ENCODE measurements at regions of chr1 and their contacts with region 1.

Region 1: DNA sequence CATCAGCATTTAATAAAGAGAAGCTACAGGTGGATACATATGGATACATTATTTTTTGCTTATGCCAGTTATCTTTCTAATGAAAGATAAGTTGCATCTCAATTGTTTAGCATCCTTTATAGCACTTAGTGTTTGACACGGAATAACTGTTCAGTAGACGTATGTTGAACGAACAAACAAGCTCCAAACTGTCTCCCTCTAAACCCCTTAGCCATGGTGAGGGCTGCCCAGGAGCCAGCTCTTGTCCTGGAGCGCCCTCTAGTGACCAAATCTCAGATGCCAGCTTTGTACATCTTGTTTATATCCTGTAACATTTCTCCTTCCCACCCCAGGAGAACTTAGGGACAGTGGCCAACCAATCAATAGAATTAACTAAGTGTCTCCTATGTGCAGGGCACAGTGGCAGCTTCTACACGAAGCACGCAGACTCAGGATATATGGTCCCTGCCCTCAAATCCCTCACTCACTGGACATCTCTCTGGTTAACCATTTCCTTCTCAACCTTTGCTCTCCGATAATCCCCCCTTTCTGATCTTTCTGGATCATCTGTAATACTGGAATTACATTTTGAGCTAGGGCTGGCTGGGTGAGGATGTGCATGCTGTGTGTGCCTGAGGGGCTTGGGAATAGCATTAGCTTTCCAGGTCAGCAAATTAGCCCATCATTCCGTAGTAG is 22.9 kb downstream of the KCNA10 start:
- DNase-seq: peak; percentile 58 to 91
- H3K4me3 ChIP-seq: no peak overlapping the region
- H3K27ac ChIP-seq: no peak overlapping the region
- H3K4me1 ChIP-seq: peaks cover 6 to 11% (median 8%) of the 10 kb centered on the region in 4 experiments; a peak in 6 of 7 replicates
- H3K27me3 ChIP-seq: no peaks in the 10 kb centered on the region
- CTCF ChIP-seq: peak; percentile 62 to 95 (median 93)
- EP300 ChIP-seq: no peak
- POLR2A ChIP-seq: no peak
- RAD21 ChIP-seq: peak; percentile 99 to 100

Region 2: GRCh38 chr1:110203021-110203661 is 292.9 kb before region 1 on chr1:
- CTCF ChIA-PET with region 1: interaction called, 50 read pairs
- POLR2A ChIA-PET with region 1: interaction called, 3 read pairs
- DNase-seq: peak in 1 of 2 experiments; percentile 81
- H3K4me3 ChIP-seq: no peak overlapping the region
- H3K27ac ChIP-seq: no peak overlapping the region
- H3K4me1 ChIP-seq: peaks cover 2 to 6% (median 4%) of the 10 kb centered on the region in 4 experiments; a peak in 5 of 7 replicates
- H3K27me3 ChIP-seq: no peaks in the 10 kb centered on the region
- CTCF ChIP-seq: peak; percentile 17 to 86 (median 76)
- EP300 ChIP-seq: no peak
- POLR2A ChIP-seq: no peak
- RAD21 ChIP-seq: peak; percentile 88 to 90

Region 3: GRCh38 chr1:110370827-110371226 is 125.2 kb before region 1 on chr1:
- CTCF ChIA-PET with region 1: no interaction called
- POLR2A ChIA-PET with region 1: no interaction called
- DNase-seq: no peak
- H3K4me3 ChIP-seq: no peak overlapping the region
- H3K27ac ChIP-seq: no peak overlapping the region
- H3K4me1 ChIP-seq: no peaks in the 10 kb centered on the region
- H3K27me3 ChIP-seq: no peaks in the 10 kb centered on the region
- CTCF ChIP-seq: no peak
- EP300 ChIP-seq: no peak
- POLR2A ChIP-seq: no peak
- RAD21 ChIP-seq: no peak

Region 4: DNA sequence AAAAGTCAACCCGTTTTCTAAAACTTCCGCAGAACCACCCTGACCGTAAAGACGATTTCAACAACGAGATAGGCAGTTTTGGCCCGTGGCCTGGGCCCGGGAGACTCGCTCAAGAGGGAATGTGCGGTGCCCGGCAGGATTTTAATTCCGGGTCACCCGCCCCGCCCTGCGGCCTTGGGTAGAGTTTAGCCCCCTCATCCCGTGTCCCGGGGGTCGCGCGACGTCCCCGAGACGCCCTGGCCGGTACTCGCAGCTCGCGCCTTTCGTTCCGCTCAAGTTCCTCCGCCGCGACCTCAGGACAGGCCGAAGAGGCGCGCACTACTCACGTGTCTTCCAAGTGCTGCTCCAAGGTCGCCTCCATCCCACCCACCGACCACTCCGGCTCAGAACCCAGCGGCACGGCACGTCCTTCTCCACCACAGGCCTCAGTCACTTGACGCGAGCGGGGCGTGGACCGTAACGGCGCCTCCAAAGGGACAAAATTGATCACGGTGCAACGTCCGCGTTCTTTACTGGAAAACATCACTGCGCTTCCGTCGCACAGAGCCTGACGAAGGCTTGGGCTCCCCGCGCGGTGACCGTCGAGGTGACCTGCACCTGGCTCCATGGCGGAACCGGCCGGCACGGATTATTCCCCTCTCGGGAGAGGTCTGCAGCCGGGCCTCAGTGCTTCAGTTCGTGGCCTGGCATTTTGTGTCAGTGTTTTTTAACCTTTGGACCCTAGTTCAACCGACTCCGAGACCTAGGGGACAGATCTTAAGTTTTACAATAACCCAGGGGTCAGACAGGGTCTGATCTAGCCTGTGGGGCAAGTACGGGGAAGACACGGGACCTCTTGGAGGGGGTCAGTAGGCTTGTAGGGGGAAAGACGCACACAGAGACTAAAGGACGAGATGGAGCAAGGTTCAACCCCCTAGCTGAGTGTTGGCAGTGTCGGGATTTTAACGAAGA is 88.5 kb before region 1 on chr1 and contains the start of gene LAMTOR5:
- CTCF ChIA-PET with region 1: interaction called, 123 read pairs
- POLR2A ChIA-PET with region 1: no interaction called
- DNase-seq: peak; percentile 67 to 91
- H3K4me3 ChIP-seq: peak within 1 kb of the TSS; percentile 78 to 90 (median 83)
- H3K27ac ChIP-seq: peak within 1 kb of the TSS; percentile 76
- H3K4me1 ChIP-seq: no peaks in the 10 kb centered on the region; a peak in 2 of 7 replicates
- H3K27me3 ChIP-seq: 0 out of 7 replicates have a peak, but pooled peaks cover 0 to 3% (median 0%) of the 10 kb centered on the region in 4 experiments
- CTCF ChIP-seq: no peak
- EP300 ChIP-seq: no peak
- POLR2A ChIP-seq: peak; percentile 68 to 91
- RAD21 ChIP-seq: 0 out of 4 replicates have a peak, but pooled peaks of 1 of the 2 experiments have one; percentile 0
- total RNA-seq, gene LAMTOR5: 84.4 and 91.9 TPM in 2 replicates

Region 5: GRCh38 chr1:110440877-110441276 is 55.2 kb before region 1 on chr1:
- CTCF ChIA-PET with region 1: interaction called, 23 read pairs
- POLR2A ChIA-PET with region 1: no interaction called
- DNase-seq: no peak
- H3K4me3 ChIP-seq: no peak overlapping the region
- H3K27ac ChIP-seq: no peak overlapping the region
- H3K4me1 ChIP-seq: no peaks in the 10 kb centered on the region
- H3K27me3 ChIP-seq: no peaks in the 10 kb centered on the region
- CTCF ChIP-seq: no peak
- EP300 ChIP-seq: no peak
- POLR2A ChIP-seq: no peak
- RAD21 ChIP-seq: no peak

Region 6: GRCh38 chr1:110482662-110483307 is 13.3 kb before region 1 on chr1:
- CTCF ChIA-PET with region 1: interaction called, 126 read pairs
- POLR2A ChIA-PET with region 1: no interaction called
- DNase-seq: no peak
- H3K4me3 ChIP-seq: no peak overlapping the region
- H3K27ac ChIP-seq: no peak overlapping the region
- H3K4me1 ChIP-seq: peaks cover 6 to 14% (median 10%) of the 10 kb centered on the region in 4 experiments
- H3K27me3 ChIP-seq: no peaks in the 10 kb centered on the region; a peak in 2 of 7 replicates
- CTCF ChIP-seq: peak; percentile 13 to 31 (median 28); a peak in 3 of 4 replicates
- EP300 ChIP-seq: no peak
- POLR2A ChIP-seq: no peak
- RAD21 ChIP-seq: no peak

Region 7: GRCh38 chr1:110524311-110525251 is 28.5 kb after region 1 on chr1:
- CTCF ChIA-PET with region 1: interaction called, 22 read pairs
- POLR2A ChIA-PET with region 1: no interaction called
- DNase-seq: peak; percentile 53 to 81
- H3K4me3 ChIP-seq: no peak overlapping the region
- H3K27ac ChIP-seq: no peak overlapping the region
- H3K4me1 ChIP-seq: peaks cover 0 to 3% (median 0%) of the 10 kb centered on the region in 4 experiments; a peak in 1 of 7 replicates
- H3K27me3 ChIP-seq: peaks cover 0 to 6% (median 0%) of the 10 kb centered on the region in 4 experiments; a peak in 4 of 7 replicates
- CTCF ChIP-seq: peak; percentile 89 to 97 (median 93)
- EP300 ChIP-seq: no peak
- POLR2A ChIP-seq: no peak
- RAD21 ChIP-seq: peak; percentile 95 to 98